ENCODE measurements at regions of chr11 and their contacts with region 1.

Region 1: DNA sequence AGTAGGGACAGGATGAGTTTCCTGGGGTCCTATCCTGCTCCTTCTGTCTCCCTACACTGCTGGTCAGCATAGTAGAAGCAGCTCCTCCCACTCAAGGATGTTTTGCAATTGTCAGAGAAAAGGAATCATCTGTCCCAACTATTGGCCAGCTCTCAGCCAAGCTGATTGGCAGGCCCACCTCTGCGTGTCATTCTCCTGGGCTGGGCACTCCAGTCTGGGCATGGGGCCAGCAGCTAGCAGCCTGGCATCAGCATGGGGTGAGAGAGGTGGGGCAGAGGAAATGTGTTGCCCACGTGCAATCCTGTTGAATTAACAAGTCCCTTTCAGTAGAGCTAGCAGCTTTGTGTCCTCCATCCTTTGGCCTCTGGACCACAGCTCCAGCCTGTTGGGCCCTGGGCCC is 14.1 kb downstream of the ANKK1 start:
- DNase-seq: peak; percentile 97
- H3K4me3 ChIP-seq: no peak overlapping the region
- H3K27ac ChIP-seq: no peak overlapping the region
- H3K4me1 ChIP-seq: peaks cover 35% of the 10 kb centered on the region
- H3K27me3 ChIP-seq: no peaks in the 10 kb centered on the region
- CTCF ChIP-seq: no peak

Region 2: DNA sequence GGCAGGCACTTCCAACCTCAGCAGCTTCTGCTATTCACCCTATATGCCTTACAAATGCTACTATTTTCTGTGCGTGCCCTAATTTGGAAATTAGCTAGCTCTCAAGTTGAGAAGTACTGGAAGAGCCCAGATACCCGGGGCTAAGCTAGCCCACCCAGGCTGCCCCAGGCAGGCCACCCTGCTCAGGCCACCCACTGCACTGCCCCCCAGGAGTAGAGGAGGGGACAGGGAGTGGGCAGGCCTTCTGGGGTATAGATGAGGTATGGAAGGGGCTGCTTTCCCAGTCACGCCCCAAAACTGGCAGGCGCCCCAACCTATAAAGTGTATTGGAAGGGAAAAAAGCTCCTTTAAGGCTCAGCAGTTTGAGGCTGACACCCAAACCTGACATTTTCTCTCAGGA is 30.0 kb after region 1 on chr11:
- CTCF ChIA-PET with region 1: no interaction called
- dilution Hi-C with region 1: loop called (anchors 5 kb)
- in situ Hi-C with region 1: no loop called
- intact Hi-C with region 1: no loop called
- DNase-seq: no peak
- H3K4me3 ChIP-seq: no peak overlapping the region
- H3K27ac ChIP-seq: no peak overlapping the region
- H3K4me1 ChIP-seq: peaks cover 18% of the 10 kb centered on the region
- H3K27me3 ChIP-seq: no peaks in the 10 kb centered on the region
- CTCF ChIP-seq: no peak

Region 3: GRCh38 chr11:113474362-113475159 is 72.8 kb after region 1 on chr11:
- CTCF ChIA-PET with region 1: no interaction called
- dilution Hi-C with region 1: no loop called
- in situ Hi-C with region 1: no loop called
- intact Hi-C with region 1: loop called (anchors 10 kb)
- DNase-seq: peak; percentile 84
- H3K4me3 ChIP-seq: peak overlapping the region; percentile 49 to 59 (median 50)
- H3K27ac ChIP-seq: peak overlapping the region; percentile 16
- H3K4me1 ChIP-seq: peaks cover 14% of the 10 kb centered on the region
- H3K27me3 ChIP-seq: no peaks in the 10 kb centered on the region
- CTCF ChIP-seq: no peak

Region 4: GRCh38 chr11:113540416-113541330 is 139.0 kb after region 1 on chr11:
- CTCF ChIA-PET with region 1: no interaction called
- dilution Hi-C with region 1: loop called (anchors 5 kb)
- in situ Hi-C with region 1: no loop called
- intact Hi-C with region 1: no loop called
- DNase-seq: no peak
- H3K4me3 ChIP-seq: no peak overlapping the region
- H3K27ac ChIP-seq: no peak overlapping the region
- H3K4me1 ChIP-seq: no peaks in the 10 kb centered on the region
- H3K27me3 ChIP-seq: no peaks in the 10 kb centered on the region
- CTCF ChIP-seq: peak in 1 of 2 donors; percentile 7

Region 5: DNA sequence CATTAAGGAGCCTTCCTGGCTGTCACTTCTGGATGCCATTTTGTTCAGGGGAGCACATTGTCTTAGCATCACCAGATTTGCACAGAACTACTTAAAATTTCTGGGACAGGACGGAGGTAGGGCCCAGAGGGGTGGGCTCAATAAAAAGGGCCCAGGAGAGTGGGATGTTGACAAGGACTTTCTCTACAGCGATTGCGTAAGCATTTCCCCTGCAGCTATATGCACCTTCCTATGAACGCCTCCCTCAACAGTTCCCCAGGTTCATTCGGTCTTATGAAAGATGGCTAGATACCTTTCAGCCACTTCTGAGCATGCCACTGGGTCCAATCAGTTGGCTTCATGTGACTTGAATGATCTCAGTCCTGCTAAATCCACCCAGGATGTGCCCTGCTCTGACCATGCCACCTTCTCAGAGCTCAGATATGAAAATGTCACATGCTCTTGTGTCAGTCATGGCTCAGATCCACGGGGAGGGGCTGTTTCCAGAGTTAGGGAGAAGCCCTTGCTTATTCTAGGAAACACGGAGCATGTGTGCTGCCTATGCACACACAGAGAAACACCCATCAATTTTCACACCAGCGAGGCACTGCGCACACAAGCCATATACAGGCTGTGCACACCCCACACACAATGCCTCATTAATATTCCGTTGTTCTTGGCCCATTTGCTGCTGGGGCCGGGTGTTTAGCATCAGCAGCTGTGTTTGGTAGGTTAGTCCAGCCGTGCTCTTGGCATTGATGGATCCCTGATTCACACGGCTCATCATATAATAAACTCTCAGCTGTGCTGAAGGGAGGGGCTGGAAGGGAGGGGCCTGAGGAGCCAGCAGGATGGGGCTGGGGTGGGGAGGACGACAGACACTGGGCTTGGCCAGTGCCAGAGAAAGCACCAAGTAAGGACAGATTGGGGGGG is 842.0 kb after region 1 on chr11:
- CTCF ChIA-PET with region 1: no interaction called
- dilution Hi-C with region 1: no loop called
- in situ Hi-C with region 1: no loop called
- intact Hi-C with region 1: no loop called
- DNase-seq: no peak
- H3K4me3 ChIP-seq: no peak overlapping the region
- H3K27ac ChIP-seq: no peak overlapping the region
- H3K4me1 ChIP-seq: no peaks in the 10 kb centered on the region
- H3K27me3 ChIP-seq: no peaks in the 10 kb centered on the region
- CTCF ChIP-seq: no peak

Measured in mammary epithelial cell (primary cell).